ENCODE measurements at regions of chr5 and their contacts with region 1.

Region 1: GRCh38 chr5:134541736-134542376 is 16.4 kb downstream of the JADE2 start:
- DNase-seq: no peak
- H3K4me3 ChIP-seq: no peak overlapping the region
- H3K27ac ChIP-seq: peak overlapping the region; percentile 61
- H3K4me1 ChIP-seq: peaks cover 75% of the 10 kb centered on the region
- CTCF ChIP-seq: no peak

Region 2: DNA sequence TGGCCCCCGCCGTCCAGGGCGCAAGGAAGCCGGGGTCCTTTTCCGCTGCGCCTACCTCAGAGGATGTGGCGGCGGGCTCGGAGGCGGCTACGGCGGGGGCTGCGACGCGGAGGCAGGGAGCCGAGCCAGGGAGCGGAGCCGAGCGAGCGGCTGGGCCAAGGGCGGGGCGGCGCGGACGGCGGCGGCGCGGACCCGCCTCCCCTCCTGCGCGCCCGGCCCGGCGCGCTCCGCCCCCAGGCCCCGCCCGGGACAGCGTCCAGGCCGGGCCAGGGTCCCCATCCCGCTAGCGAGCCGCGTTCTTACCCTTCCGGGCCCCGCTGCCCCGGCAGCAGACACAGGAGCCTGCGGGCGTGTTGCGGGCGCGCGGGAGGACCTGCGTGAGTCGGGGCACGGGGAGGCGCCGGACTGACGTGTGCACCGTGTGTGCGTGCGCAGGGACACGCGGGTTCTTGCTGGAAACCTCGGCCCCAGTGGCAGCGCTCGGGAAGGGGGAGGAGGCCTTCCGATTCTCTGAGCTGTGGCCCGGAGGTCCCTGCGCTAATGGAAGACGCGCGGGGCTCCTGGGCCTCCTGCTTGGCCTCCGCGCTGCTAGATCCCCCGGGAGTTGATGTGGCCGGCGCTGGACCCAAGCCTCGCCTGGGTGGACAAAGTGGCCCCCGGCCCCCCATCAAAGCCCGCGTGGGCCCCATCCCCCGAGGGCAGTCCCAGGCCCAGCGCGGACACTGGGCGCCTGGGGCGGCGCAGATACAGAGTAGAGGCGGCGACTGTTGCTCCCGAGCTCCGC is 537.1 kb before region 1 on chr5 and contains the start of gene VDAC1:
- CTCF ChIA-PET with region 1: no interaction called
- POLR2A ChIA-PET with region 1: interaction called, 3 read pairs
- intact Hi-C with region 1: loop called (anchors 1 kb)
- DNase-seq: peak; percentile 82
- H3K4me3 ChIP-seq: peak within 1 kb of the TSS; percentile 83
- H3K27ac ChIP-seq: peak within 1 kb of the TSS; percentile 66
- H3K4me1 ChIP-seq: peaks cover 28% of the 10 kb centered on the region
- CTCF ChIP-seq: no peak
- total RNA-seq, gene VDAC1: 143 and 157 TPM in 2 replicates

Region 3: DNA sequence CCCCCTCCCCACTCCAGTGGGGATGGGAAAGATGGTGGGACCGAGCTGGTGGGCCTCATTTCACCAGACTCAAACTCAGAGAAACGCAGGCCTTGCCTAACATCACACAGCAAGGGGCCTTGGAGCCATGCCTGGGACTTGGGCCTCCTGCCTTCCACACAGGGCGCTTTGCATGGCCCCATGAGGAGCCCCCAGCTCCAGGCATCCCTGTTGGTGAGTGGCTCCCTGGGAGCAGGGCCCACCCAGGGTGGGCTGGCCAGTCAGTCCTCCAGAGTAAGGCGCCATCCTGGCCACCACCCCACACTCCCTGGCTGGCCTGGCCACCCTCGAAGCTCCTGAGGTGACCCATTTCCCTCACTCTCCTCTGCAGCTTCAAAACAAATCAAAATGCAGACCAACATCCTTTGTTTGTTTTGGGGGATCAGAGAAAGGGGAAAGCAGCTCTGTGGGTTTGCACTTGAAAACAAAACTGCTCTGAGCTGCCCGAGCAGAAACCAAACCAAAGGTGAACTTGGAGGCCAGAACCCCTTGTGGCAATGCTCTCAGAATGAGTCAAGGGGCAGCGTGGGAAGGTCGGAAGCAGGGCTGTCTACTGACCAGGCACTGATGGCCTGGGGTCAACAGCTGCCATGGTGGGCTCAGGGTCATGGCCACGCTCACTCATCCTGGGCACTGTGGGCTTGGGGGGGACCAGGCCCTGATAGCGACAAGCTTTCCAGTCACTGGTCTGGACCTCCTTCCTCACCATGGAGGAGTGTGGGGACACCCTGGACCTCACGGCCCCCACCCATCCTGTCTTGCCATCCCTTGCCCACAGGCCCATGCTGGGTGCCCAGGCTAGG is 500.1 kb before region 1 on chr5:
- CTCF ChIA-PET with region 1: no interaction called
- POLR2A ChIA-PET with region 1: no interaction called
- intact Hi-C with region 1: no loop called
- DNase-seq: no peak
- H3K4me3 ChIP-seq: no peak overlapping the region
- H3K27ac ChIP-seq: no peak overlapping the region
- H3K4me1 ChIP-seq: no peaks in the 10 kb centered on the region
- CTCF ChIP-seq: no peak

Region 4: GRCh38 chr5:134240421-134240962 is 301.4 kb before region 1 on chr5:
- CTCF ChIA-PET with region 1: no interaction called
- POLR2A ChIA-PET with region 1: no interaction called
- intact Hi-C with region 1: no loop called
- DNase-seq: no peak
- H3K4me3 ChIP-seq: no peak overlapping the region
- H3K27ac ChIP-seq: no peak overlapping the region
- H3K4me1 ChIP-seq: no peaks in the 10 kb centered on the region
- CTCF ChIP-seq: no peak

Region 5: GRCh38 chr5:134555890-134556311 is 14.0 kb after region 1 on chr5:
- CTCF ChIA-PET with region 1: no interaction called
- POLR2A ChIA-PET with region 1: interaction called, 20 read pairs
- intact Hi-C with region 1: no loop called
- DNase-seq: peak; percentile 38
- H3K4me3 ChIP-seq: no peak overlapping the region
- H3K27ac ChIP-seq: peak overlapping the region; percentile 64
- H3K4me1 ChIP-seq: peaks cover 43% of the 10 kb centered on the region
- CTCF ChIP-seq: peak; percentile 35; the same call in 1 of the 2 replicates

Region 6: GRCh38 chr5:135039271-135040045 is 497.6 kb after region 1 on chr5:
- CTCF ChIA-PET with region 1: no interaction called
- POLR2A ChIA-PET with region 1: no interaction called
- intact Hi-C with region 1: loop called (anchors 10 kb)
- DNase-seq: no peak
- H3K4me3 ChIP-seq: no peak overlapping the region
- H3K27ac ChIP-seq: no peak overlapping the region
- H3K4me1 ChIP-seq: peaks cover 80% of the 10 kb centered on the region
- CTCF ChIP-seq: no peak

Measured in OCI-LY7 (cell line).